ENCODE measurements at regions of chr19 and their contacts with region 1.

Region 1: DNA sequence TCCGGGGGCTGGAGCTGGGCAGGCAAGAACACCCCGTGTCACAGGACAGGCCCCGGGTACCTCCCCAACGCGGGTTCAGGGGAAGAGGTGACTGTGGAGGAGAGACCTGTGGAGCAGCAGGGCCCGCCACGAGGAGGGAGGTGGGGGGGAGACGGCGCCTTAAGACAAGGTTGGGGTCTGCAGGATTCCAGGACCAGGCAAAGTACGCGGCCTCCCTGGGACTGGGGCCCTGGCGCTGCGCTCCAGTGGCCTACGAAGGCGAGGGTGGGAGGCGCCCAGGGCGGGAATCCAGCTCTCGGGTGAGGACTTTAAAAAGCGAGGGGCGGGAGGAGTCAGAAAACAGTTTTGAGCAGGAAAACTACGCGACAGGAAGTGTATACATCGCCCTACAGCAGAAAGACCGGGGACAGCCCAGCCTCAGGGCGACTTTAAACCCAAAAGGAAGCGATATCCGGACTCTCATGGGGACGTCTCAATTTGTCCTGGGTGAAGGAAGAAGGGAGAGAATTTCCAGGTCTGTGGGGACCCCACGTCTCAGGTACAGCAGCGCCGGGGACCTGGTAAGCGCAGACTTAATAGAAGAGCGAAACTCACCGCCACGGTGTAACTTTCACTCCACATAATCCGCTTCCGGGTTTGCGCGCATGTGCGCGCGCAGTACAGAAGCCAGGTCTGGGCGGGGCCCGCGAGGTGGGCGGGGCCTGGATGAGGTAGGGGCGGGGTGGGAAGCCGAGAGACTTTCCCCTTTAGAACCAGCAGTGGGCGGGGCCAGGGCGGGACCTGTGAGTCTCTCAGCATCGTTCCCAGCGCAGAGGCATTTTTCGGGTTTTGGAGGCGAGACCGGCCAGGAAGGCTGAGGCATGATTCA is at the start of gene ZNF83:
- DNase-seq: peak; percentile 99
- ATAC-seq: peak; percentile 100
- H3K4me3 ChIP-seq: peak within 1 kb of the TSS; percentile 38 to 65
- H3K27ac ChIP-seq: peak within 1 kb of the TSS in 1 of 2 donors; percentile 75
- H3K4me1 ChIP-seq: no peaks in the 10 kb centered on the region
- H3K27me3 ChIP-seq: no peaks in the 10 kb centered on the region
- total RNA-seq, gene ZNF83: 51.3 to 78.7 TPM

Region 2: DNA sequence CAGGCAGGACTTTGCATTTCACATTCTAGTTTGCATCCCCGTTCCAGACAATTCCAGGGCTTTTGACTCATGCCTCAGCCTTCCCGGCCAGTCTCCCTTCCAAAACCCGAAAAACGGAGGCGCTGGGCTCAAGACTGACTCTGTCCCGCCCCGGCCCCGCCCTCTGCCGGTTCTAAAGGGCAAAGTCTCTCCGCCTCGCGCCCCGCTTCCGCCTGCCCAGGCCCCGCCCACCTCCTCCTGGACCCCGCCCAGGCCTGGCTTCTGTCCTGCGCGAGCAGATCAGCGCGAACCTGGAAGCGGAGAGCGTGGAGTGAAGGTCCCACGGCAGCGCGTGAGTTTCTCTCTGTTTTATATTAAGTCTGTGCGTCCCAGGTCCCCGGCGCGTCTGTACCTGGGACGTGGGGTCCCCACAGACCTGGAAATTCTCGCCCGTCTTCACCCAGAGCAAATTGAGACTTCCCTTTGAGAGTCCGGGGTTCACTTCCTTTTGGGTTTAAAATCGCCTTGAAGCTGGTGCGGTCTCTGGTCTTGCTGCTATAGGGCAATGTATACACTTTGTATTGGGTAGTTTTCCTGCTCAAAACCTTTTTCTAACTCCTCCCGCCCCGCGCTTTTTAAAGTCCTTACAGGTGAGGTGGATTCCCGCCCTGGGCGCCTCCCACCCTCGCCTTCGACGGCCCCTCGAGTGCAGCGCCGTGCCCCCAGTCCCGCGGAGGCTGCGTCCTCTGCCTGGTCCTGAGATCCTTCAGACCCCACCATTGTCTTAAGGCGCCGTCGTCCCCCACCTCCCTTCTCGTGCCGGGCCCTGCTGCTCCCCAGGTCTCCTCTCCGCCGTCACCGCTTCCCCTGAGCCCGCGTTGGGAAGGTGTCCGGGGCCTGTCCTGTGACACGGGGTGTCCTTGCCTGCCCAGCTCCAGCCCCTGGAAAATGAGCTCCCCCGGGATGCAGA is 36.7 kb before region 1 on chr19:
- intact Hi-C with region 1: loop called (anchors 5 kb)
- DNase-seq: peak; percentile 97 to 99
- ATAC-seq: peak; percentile 97
- H3K4me3 ChIP-seq: peak overlapping the region; percentile 48 to 58
- H3K27ac ChIP-seq: peak overlapping the region in 1 of 2 donors; percentile 43
- H3K4me1 ChIP-seq: no peaks in the 10 kb centered on the region
- H3K27me3 ChIP-seq: no peaks in the 10 kb centered on the region

Measured in aorta (tissue), 5 donors.